Common myeloid progenitor, CD34-positive (primary cell): ENCODE measurements at regions of chr19 and their contacts with region 1.

Region 1: DNA sequence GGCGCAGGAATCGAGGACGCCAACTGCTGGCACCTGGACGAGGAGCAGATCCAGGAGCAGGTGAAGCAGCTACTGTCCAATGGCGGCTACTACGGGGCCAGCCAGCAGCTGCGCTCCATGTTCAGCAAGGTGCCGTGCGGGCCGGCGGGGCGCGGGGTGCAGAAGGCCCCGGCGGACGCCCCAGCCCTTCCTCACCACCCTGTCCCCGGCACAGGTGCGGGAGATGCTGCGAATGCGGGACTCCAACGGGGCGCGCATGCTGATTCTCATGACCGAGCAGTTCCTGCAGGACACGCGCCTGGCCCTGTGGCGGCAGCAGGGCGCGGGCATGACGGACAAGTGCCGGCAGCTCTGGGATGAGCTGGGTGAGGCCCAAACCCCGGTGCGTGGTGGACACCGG is 13.6 kb downstream of the ZSWIM4 start:
- DNase-seq: no peak
- H3K4me3 ChIP-seq: no peak overlapping the region
- H3K27ac ChIP-seq: no peak overlapping the region
- H3K4me1 ChIP-seq: no peaks in the 10 kb centered on the region
- H3K27me3 ChIP-seq: no peaks in the 10 kb centered on the region

Region 2: DNA sequence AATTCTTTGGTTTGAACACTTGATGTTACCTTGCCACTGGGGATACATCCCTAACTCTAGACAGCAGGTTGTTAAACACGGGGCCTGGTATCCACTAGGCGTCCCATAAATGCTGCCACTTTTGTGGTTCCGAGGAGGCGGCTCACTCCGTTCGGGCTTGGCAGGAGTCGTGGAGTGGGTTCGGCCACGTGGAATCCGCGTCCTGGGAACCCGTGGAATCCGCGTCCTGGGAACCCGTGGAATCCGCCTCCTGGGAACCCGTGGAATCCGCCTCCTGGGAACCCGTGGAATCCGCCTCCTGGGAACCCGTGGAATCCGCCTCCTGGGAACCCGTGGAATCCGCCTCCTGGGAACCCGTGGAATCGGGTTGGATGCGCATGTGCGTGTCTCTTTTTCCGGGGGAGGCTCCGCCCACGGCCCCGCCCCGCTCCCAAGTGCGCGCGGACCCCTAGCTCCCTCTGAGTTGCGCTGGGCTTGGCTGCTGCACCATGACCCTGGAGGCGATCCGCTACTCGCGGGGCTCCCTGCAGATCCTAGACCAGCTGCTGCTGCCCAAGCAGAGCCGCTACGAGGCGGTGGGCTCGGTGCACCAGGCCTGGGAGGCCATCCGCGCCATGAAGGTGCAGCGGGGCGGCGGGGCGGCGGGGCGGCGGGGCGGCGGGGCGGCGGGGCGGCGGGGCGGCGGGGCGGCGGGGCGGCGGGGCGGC is 44.6 kb before region 1 on chr19 and contains the start of gene MRI1:
- CTCF ChIA-PET with region 1: no interaction called
- POLR2A ChIA-PET with region 1: no interaction called
- DNase-seq: peak; percentile 59 to 70 (median 69)
- H3K4me3 ChIP-seq: peak within 1 kb of the TSS; percentile 50 to 87 (median 74)
- H3K27ac ChIP-seq: peak within 1 kb of the TSS in 1 of 2 experiments; percentile 61
- H3K4me1 ChIP-seq: peaks cover 0 to 15% (median 13%) of the 10 kb centered on the region in 4 experiments
- H3K27me3 ChIP-seq: no peaks in the 10 kb centered on the region

Region 3: GRCh38 chr19:13794757-13795589 is 13.9 kb before region 1 on chr19 and contains the start of gene ZSWIM4:
- CTCF ChIA-PET with region 1: interaction called, 11 read pairs
- POLR2A ChIA-PET with region 1: no interaction called
- DNase-seq: peak; percentile 98 to 99 (median 99)
- H3K4me3 ChIP-seq: peak within 1 kb of the TSS; percentile 70 to 94 (median 81)
- H3K27ac ChIP-seq: peak within 1 kb of the TSS; percentile 50 to 86
- H3K4me1 ChIP-seq: peaks cover 10 to 40% (median 26%) of the 10 kb centered on the region in 4 experiments
- H3K27me3 ChIP-seq: no peaks in the 10 kb centered on the region

Region 4: DNA sequence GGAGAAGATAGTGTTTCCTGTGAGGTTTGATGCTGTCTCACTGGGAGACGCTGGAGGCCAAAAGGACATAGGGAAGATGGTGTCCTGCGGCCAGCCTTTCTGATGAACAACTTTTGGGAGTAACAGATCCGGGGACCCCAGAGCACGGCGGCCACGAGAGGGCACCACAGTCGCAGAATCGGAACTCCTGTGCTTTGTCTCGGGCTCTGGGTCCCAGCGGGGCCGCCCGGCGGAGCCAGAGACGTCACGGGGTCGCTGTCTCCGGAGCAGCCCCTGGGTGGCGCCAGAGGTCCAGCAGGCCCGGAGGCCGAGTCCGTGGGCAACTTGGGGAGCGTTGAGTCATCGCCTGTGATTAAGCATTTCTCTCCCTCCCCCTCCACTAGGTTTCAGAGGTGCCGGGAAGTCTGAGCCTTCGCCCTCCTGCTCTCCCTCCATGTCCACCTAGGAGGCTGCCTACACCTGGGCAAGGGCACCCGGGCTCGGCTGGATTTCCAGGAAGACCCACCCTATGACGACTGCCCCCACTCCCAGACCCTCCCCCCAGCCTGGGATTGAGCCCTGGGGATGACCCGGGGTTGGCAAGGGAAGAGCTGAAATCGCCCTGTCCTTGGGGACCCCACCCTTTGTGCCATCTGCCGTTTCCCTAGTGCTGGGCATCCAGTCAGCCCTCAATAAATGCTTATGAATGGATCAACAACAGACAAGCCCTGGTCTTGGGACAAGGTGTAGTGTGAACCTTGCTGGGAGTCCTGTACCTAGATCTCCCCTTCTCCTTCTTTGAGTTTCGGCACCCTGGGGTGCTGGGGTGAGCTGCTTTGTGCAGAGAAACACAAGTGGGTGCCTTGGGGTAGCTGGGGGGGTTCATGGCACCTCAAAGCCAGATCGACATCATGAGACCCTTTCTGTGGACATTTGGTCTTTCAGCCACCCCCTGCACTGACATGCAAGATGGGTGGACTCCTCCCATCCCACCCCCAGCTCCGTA is 71.5 kb after region 1 on chr19:
- CTCF ChIA-PET with region 1: no interaction called
- POLR2A ChIA-PET with region 1: no interaction called
- DNase-seq: peak; percentile 95 to 98 (median 97)
- H3K4me3 ChIP-seq: peak overlapping the region in 6 of 7 experiments; percentile 3 to 65 (median 47)
- H3K27ac ChIP-seq: peak overlapping the region in 1 of 2 experiments; percentile 82
- H3K4me1 ChIP-seq: peaks cover 3 to 65% (median 43%) of the 10 kb centered on the region in 4 experiments
- H3K27me3 ChIP-seq: no peaks in the 10 kb centered on the region

Region 5: DNA sequence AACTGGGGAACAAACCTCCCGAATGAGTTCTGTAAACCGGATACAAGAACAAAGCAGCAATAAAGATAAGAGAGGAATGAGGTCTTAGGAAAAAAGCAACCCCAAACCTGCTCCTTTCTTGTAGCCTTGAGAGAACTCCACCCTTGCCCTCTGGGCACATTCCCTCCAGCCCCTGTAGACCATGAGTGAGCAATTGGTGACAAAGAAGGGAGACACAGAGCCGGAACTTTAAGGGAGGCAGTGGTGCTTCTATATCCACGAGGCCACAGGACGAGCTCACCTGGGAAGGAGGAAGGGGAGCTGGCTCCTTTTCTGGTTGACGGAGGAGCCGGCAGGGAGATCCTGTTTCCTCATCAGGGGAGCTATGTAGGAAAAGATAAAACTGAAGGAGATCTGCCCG is 84.0 kb after region 1 on chr19:
- CTCF ChIA-PET with region 1: no interaction called
- POLR2A ChIA-PET with region 1: no interaction called
- DNase-seq: no peak
- H3K4me3 ChIP-seq: no peak overlapping the region
- H3K27ac ChIP-seq: no peak overlapping the region
- H3K4me1 ChIP-seq: peaks cover 0 to 8% (median 4%) of the 10 kb centered on the region in 4 experiments
- H3K27me3 ChIP-seq: no peaks in the 10 kb centered on the region